A673 (cell line): ENCODE measurements at regions of chr3 and their contacts with region 1.

Region 1: DNA sequence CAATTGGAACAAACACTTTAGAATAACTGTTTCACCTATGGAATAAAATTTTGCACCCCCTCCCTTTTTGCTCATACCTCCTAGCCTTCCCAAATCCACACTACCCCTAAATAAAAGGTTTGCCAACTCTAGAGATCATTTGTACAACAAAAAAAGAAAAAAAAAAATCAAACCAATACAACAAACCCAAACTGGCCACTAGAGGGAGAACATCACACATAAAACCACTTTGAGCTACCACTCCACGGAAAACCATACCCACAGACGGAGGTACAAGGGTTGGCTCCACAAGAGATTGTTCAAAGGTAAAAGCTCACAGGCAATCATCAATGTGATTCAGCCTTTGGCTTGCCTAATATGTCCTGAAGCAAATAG is 47.6 kb downstream of the SETMAR start:
- DNase-seq: peak; percentile 68
- H3K4me3 ChIP-seq: no peak overlapping the region
- H3K27ac ChIP-seq: no peak overlapping the region
- H3K4me1 ChIP-seq: no peaks in the 10 kb centered on the region
- H3K27me3 ChIP-seq: no peaks in the 10 kb centered on the region
- CTCF ChIP-seq: peak; percentile 83

Region 2: GRCh38 chr3:4493014-4493940 is 142.5 kb after region 1 on chr3 and contains the start of gene ITPR1:
- CTCF ChIA-PET with region 1: interaction called, 13 read pairs
- POLR2A ChIA-PET with region 1: interaction called, 3 read pairs
- intact Hi-C with region 1: loop called (anchors 5 kb)
- DNase-seq: peak; percentile 99
- H3K4me3 ChIP-seq: peak within 1 kb of the TSS; percentile 66
- H3K27ac ChIP-seq: peak within 1 kb of the TSS; percentile 53
- H3K4me1 ChIP-seq: peaks cover 3% of the 10 kb centered on the region
- H3K27me3 ChIP-seq: peaks cover 31% of the 10 kb centered on the region
- CTCF ChIP-seq: no peak
- total RNA-seq, gene ITPR1: 8.0 and 8.6 TPM in 2 replicates

Region 3: DNA sequence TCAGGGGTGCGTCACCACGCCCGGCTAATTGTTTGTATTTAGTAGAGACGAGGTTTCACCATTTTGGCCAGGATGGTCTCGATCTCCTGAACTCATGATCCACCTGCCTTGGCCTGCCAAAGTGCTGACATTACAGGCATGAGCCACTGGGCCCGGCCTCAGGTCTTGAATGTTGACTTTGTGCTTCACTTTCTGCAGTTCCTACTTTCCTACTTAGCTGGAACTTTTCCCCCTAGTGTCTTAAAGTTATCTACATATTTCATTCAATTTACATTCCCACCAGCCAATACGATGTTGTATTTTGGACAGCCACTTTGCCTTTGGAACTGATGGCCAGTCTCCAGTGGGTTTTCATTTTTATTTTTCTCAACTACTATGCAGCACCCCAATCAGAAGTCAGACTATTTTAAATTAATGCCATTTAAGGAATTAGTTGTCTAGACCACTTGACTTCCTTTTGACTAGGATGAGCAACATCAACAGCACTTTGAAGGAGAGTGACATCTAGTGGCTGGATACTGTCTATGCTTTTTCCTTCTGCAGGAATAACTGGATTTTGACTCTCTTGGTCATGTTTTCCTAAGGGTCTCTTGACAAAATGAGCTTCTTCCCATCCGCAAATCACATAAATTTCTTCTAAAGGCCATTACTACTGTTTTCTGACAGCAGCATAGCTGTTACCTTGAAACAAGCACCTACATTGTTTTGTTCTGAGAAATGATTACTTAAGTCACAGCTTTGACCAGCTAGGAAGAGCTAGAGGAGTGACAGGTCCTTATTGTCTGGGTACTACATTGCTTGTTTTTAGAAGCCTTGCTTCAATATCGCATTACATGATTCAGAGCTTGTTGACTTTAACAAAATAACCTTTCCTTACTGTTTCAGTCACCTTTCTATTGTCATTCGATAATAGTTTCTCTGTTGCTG is 282.6 kb after region 1 on chr3:
- CTCF ChIA-PET with region 1: interaction called, 16 read pairs
- POLR2A ChIA-PET with region 1: no interaction called
- intact Hi-C with region 1: loop called (anchors 1 kb)
- DNase-seq: peak; percentile 67
- H3K4me3 ChIP-seq: no peak overlapping the region
- H3K27ac ChIP-seq: no peak overlapping the region
- H3K4me1 ChIP-seq: no peaks in the 10 kb centered on the region
- H3K27me3 ChIP-seq: peaks cover 3% of the 10 kb centered on the region
- CTCF ChIP-seq: peak; percentile 89